CD8-positive, alpha-beta T cell (primary cell): ENCODE measurements at regions of chr12 and their contacts with region 1.

Region 1: GRCh38 chr12:121888478-121889266 is at the start of gene PSMD9:
- DNase-seq: peak; percentile 96 to 99 (median 99)
- ATAC-seq: peak; percentile 93
- H3K4me3 ChIP-seq: peak within 1 kb of the TSS; percentile 72 to 80
- H3K4me3 Mint-ChIP-seq: peak within 1 kb of the TSS; percentile 99
- H3K27ac ChIP-seq: peak within 1 kb of the TSS; percentile 88 to 92
- H3K27ac Mint-ChIP-seq: peak within 1 kb of the TSS; percentile 99
- H3K4me1 ChIP-seq: peaks cover 32% of the 10 kb centered on the region
- H3K4me1 Mint-ChIP-seq: peaks cover 35% of the 10 kb centered on the region
- H3K27me3 ChIP-seq: no peaks in the 10 kb centered on the region
- H3K27me3 Mint-ChIP-seq: no peaks in the 10 kb centered on the region
- CTCF ChIP-seq: peak; percentile 27
- total RNA-seq, gene PSMD9: 38.7 to 42.2 TPM

Region 2: GRCh38 chr12:120710031-120710804 is 1178.5 kb before region 1 on chr12 and contains the start of gene UNC119B:
- CTCF ChIA-PET with region 1: no interaction called
- POLR2A ChIA-PET with region 1: no interaction called
- intact Hi-C with region 1: loop called in 1 of 2 experiments (anchors 5 kb)
- DNase-seq: peak; percentile 38 to 85 (median 77)
- ATAC-seq: peak; percentile 88
- H3K4me3 ChIP-seq: peak within 1 kb of the TSS; percentile 64 to 68
- H3K4me3 Mint-ChIP-seq: peak within 1 kb of the TSS; percentile 93
- H3K27ac ChIP-seq: peak within 1 kb of the TSS; percentile 40 to 70
- H3K27ac Mint-ChIP-seq: peak within 1 kb of the TSS; percentile 89
- H3K4me1 ChIP-seq: peaks cover 22% of the 10 kb centered on the region
- H3K4me1 Mint-ChIP-seq: peaks cover 37% of the 10 kb centered on the region
- H3K27me3 ChIP-seq: no peaks in the 10 kb centered on the region
- H3K27me3 Mint-ChIP-seq: no peaks in the 10 kb centered on the region
- CTCF ChIP-seq: no peak
- total RNA-seq, gene UNC119B: 8.1 to 8.4 TPM

Region 3: GRCh38 chr12:121688966-121689365 is 199.7 kb before region 1 on chr12:
- CTCF ChIA-PET with region 1: no interaction called
- POLR2A ChIA-PET with region 1: no interaction called
- intact Hi-C with region 1: loop called (anchors 2 kb)
- DNase-seq: no peak
- ATAC-seq: no peak
- H3K4me3 ChIP-seq: no peak overlapping the region
- H3K4me3 Mint-ChIP-seq: no peak overlapping the region
- H3K27ac ChIP-seq: no peak overlapping the region
- H3K27ac Mint-ChIP-seq: no peak overlapping the region
- H3K4me1 ChIP-seq: peaks cover 5% of the 10 kb centered on the region
- H3K4me1 Mint-ChIP-seq: peaks cover 8% of the 10 kb centered on the region
- H3K27me3 ChIP-seq: no peaks in the 10 kb centered on the region
- H3K27me3 Mint-ChIP-seq: no peaks in the 10 kb centered on the region
- CTCF ChIP-seq: no peak

Region 4: GRCh38 chr12:121712461-121713256 is 176.0 kb before region 1 on chr12 and contains the start of gene TMEM120B:
- CTCF ChIA-PET with region 1: no interaction called
- POLR2A ChIA-PET with region 1: interaction called, 10 read pairs
- intact Hi-C with region 1: loop called in 1 of 2 experiments (anchors 2 kb)
- DNase-seq: peak; percentile 70 to 92 (median 85)
- ATAC-seq: peak; percentile 92
- H3K4me3 ChIP-seq: peak within 1 kb of the TSS; percentile 96 to 100
- H3K4me3 Mint-ChIP-seq: peak within 1 kb of the TSS; percentile 92
- H3K27ac ChIP-seq: peak within 1 kb of the TSS; percentile 73 to 89
- H3K27ac Mint-ChIP-seq: peak within 1 kb of the TSS; percentile 91
- H3K4me1 ChIP-seq: peaks cover 17% of the 10 kb centered on the region
- H3K4me1 Mint-ChIP-seq: peaks cover 31% of the 10 kb centered on the region
- H3K27me3 ChIP-seq: no peaks in the 10 kb centered on the region
- H3K27me3 Mint-ChIP-seq: no peaks in the 10 kb centered on the region
- CTCF ChIP-seq: no peak
- total RNA-seq, gene TMEM120B: 6.4 to 7.3 TPM

Region 5: GRCh38 chr12:121802846-121803630 is 85.6 kb before region 1 on chr12:
- CTCF ChIA-PET with region 1: interaction called, 11 read pairs
- POLR2A ChIA-PET with region 1: interaction called, 14 read pairs
- intact Hi-C with region 1: no loop called
- DNase-seq: peak; percentile 79 to 95 (median 88)
- ATAC-seq: peak; percentile 43
- H3K4me3 ChIP-seq: peak overlapping the region; percentile 73 to 82
- H3K4me3 Mint-ChIP-seq: peak overlapping the region; percentile 94
- H3K27ac ChIP-seq: peak overlapping the region; percentile 94 to 98
- H3K27ac Mint-ChIP-seq: peak overlapping the region; percentile 99
- H3K4me1 ChIP-seq: peaks cover 34% of the 10 kb centered on the region
- H3K4me1 Mint-ChIP-seq: peaks cover 28% of the 10 kb centered on the region
- H3K27me3 ChIP-seq: no peaks in the 10 kb centered on the region
- H3K27me3 Mint-ChIP-seq: no peaks in the 10 kb centered on the region
- CTCF ChIP-seq: no peak

Region 6: DNA sequence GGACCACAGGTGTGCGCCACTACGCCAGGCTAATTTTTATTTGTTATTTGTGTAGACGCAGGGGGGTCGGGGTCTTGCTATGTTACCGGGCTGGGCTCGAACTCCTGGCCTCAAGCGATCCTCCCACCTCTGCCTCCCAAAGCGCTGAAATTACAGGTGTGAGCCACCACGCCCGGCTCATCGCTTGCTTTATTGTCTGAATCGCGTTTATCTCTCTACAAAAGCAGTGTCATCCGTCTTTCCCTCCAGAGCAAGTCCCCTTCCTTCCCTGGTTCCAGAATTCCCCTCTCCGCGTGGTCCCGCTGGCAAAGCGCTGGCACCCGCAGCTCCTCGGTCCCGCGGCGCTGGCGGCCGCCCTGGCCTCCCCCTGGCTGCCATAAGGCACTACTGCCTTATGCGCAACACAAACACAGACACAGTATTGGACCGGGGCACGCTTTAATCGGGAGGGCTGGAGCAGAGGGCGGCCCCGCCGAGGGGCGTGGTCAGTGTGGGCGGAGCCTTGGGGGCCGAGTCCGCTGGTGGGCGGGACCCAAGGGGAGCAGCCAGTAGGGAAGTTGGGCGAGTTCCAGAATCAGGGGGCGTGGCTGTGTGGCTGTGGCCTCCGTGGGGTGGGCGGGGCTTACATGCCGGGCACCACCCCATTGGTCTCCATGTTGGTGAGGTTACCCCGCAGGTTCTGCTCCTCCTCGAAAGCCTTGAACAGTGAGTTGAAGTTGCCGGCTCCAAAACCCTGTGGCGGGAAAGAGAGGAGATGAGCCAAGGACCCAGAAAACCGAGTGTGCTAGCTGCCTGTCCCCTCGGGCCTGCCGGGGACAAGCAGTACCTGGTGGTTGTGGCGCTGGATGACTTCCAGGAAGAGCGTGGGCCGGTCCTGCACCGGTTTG is 49.3 kb before region 1 on chr12:
- CTCF ChIA-PET with region 1: interaction called, 3 read pairs
- POLR2A ChIA-PET with region 1: interaction called, 3 read pairs
- intact Hi-C with region 1: loop called (anchors 1 kb)
- DNase-seq: peak; percentile 99 to 100 (median 100)
- ATAC-seq: peak; percentile 97
- H3K4me3 ChIP-seq: peak overlapping the region; percentile 73 to 95
- H3K4me3 Mint-ChIP-seq: peak overlapping the region; percentile 97
- H3K27ac ChIP-seq: peak overlapping the region; percentile 34 to 54
- H3K27ac Mint-ChIP-seq: peak overlapping the region; percentile 88
- H3K4me1 ChIP-seq: peaks cover 7% of the 10 kb centered on the region
- H3K4me1 Mint-ChIP-seq: peaks cover 13% of the 10 kb centered on the region
- H3K27me3 ChIP-seq: no peaks in the 10 kb centered on the region
- H3K27me3 Mint-ChIP-seq: no peaks in the 10 kb centered on the region
- CTCF ChIP-seq: peak; percentile 27

Region 7: GRCh38 chr12:121939186-121939585 is 50.5 kb after region 1 on chr12:
- CTCF ChIA-PET with region 1: no interaction called
- POLR2A ChIA-PET with region 1: no interaction called
- intact Hi-C with region 1: no loop called
- DNase-seq: no peak
- ATAC-seq: no peak
- H3K4me3 ChIP-seq: no peak overlapping the region
- H3K4me3 Mint-ChIP-seq: no peak overlapping the region
- H3K27ac ChIP-seq: no peak overlapping the region
- H3K27ac Mint-ChIP-seq: no peak overlapping the region
- H3K4me1 ChIP-seq: no peaks in the 10 kb centered on the region
- H3K4me1 Mint-ChIP-seq: peaks cover 12% of the 10 kb centered on the region
- H3K27me3 ChIP-seq: no peaks in the 10 kb centered on the region
- H3K27me3 Mint-ChIP-seq: no peaks in the 10 kb centered on the region
- CTCF ChIP-seq: no peak

Region 8: GRCh38 chr12:122265931-122266771 is 377.5 kb after region 1 on chr12 and contains the start of gene VPS33A:
- CTCF ChIA-PET with region 1: no interaction called
- POLR2A ChIA-PET with region 1: no interaction called
- intact Hi-C with region 1: loop called in 1 of 2 experiments (anchors 1 kb)
- DNase-seq: peak; percentile 82 to 97 (median 92)
- ATAC-seq: peak; percentile 72
- H3K4me3 ChIP-seq: peak within 1 kb of the TSS; percentile 89 to 95
- H3K4me3 Mint-ChIP-seq: peak within 1 kb of the TSS; percentile 97
- H3K27ac ChIP-seq: peak within 1 kb of the TSS; percentile 95 to 96
- H3K27ac Mint-ChIP-seq: peak within 1 kb of the TSS; percentile 100
- H3K4me1 ChIP-seq: peaks cover 9% of the 10 kb centered on the region
- H3K4me1 Mint-ChIP-seq: peaks cover 36% of the 10 kb centered on the region
- H3K27me3 ChIP-seq: no peaks in the 10 kb centered on the region
- H3K27me3 Mint-ChIP-seq: no peaks in the 10 kb centered on the region
- CTCF ChIP-seq: no peak
- total RNA-seq, gene VPS33A: 11.6 to 13.1 TPM